IMR-90 (cell line): ENCODE measurements at regions of chr1 and their contacts with region 1.

Region 1: DNA sequence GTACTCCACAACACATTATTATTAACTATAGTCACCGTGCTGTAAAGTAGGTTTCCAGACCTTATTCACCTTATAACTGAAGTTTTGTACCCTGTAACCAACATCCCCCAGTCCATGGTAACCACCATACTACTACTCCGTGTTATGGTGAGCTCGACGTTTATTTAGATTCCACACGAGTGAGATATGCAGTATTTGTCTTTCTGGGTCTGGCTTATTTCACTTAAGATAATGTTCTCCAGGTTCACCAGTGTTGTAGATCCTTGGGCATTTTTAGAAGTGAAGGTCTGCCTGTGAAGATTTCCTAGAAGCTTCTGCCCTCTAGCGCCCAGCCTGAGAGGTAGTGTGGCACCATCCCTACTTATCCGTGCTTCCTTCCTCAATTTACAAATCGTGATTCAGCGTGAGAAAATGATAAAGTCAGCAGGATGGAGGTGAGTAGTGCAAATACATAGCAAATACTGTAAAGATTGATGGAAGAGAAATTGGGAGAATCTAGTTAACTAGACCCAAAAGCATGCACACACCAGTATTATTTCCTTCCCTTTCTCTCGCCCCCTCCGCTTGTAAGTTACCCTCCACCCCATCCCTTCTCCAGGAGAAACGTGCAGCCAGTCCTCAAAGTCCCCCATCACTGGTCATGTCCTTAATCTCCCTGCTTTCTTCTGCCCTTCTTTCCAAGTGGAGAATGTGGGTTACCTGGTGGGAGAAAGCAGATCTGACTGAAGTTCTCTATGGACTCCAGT is 36.0 kb upstream of the DISC1 start:
- DNase-seq: peak; percentile 83
- ATAC-seq: peak; percentile 99
- H3K4me3 ChIP-seq: no peak overlapping the region
- H3K27ac ChIP-seq: no peak overlapping the region
- H3K4me1 ChIP-seq: no peaks in the 10 kb centered on the region
- H3K27me3 ChIP-seq: no peaks in the 10 kb centered on the region
- CTCF ChIP-seq: peak; percentile 79
- POLR2A ChIP-seq: 0 out of 2 replicates have a peak, but pooled peaks have one; percentile 23
- RAD21 ChIP-seq: peak; percentile 82

Region 2: GRCh38 chr1:231369282-231369681 is 221.3 kb before region 1 on chr1:
- CTCF ChIA-PET with region 1: interaction called, 10 read pairs
- POLR2A ChIA-PET with region 1: no interaction called
- dilution Hi-C with region 1: no loop called
- in situ Hi-C with region 1: loop called (anchors 5 kb)
- intact Hi-C with region 1: no loop called
- DNase-seq: no peak
- ATAC-seq: no peak
- H3K4me3 ChIP-seq: no peak overlapping the region
- H3K27ac ChIP-seq: no peak overlapping the region
- H3K4me1 ChIP-seq: no peaks in the 10 kb centered on the region; the same call in 1 of the 2 replicates
- H3K27me3 ChIP-seq: no peaks in the 10 kb centered on the region
- CTCF ChIP-seq: no peak
- POLR2A ChIP-seq: no peak
- RAD21 ChIP-seq: no peak

Region 3: DNA sequence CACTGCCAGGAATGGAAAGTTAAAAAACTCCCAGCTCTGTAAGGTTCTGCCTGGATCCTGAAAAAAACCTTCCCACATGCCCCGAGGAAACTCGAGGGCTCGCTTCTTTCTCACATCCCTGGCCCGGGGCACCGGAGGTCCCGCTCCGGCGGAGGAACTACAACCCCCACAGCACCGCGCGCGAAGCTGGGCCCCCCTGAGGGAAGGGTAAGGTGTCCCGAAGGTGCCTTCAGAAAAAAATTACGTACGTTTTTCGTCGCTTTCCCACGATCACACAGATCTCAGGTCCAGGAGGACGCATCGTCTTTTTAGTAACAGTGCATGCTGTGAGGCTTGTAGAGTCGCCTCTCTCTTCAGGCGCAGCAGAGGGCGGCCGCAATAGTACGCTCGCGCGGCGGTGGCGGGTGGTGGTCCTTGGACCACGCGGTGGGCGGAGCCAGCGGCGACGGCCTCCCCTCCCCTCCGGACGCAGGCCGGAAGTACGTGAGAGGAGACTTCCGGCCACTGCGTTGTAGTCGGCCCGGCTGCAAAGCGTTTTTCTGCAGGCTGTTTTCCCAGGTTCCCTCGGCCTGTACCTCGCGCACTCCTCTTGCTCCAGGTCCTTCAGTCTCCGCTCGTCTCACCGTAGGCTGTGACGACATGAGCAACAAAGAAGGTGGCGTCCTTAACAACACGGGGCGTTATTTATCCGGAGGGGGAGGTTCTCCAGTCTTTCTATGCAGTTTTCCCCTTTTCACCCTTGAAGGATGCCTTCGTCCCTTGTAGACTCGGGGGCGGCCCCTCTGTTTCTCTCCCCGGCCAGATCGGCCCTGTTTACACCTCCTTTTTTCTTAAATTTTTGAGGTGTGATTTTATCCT is 62.2 kb before region 1 on chr1 and contains the start of gene TSNAX:
- CTCF ChIA-PET with region 1: no interaction called
- POLR2A ChIA-PET with region 1: interaction called, 11 read pairs
- dilution Hi-C with region 1: no loop called
- in situ Hi-C with region 1: no loop called
- intact Hi-C with region 1: no loop called
- DNase-seq: peak; percentile 92
- ATAC-seq: peak; percentile 99
- H3K4me3 ChIP-seq: peak within 1 kb of the TSS; percentile 75
- H3K27ac ChIP-seq: peak within 1 kb of the TSS; percentile 89
- H3K4me1 ChIP-seq: peaks cover 5% of the 10 kb centered on the region
- H3K27me3 ChIP-seq: no peaks in the 10 kb centered on the region
- CTCF ChIP-seq: no peak
- POLR2A ChIP-seq: peak; percentile 81
- RAD21 ChIP-seq: no peak; the same call in 1 of the 2 replicates
- total RNA-seq, gene TSNAX: 60.6 and 61.4 TPM in 2 replicates